Right ventricle myocardium inferior (tissue), 1 donor: ENCODE measurements at regions of chr13 and their contacts with region 1.

Region 1: GRCh38 chr13:28796938-28797257 is 23.2 kb upstream of the MTUS2 start:
- DNase-seq: no peak
- ATAC-seq: no peak

Region 2: DNA sequence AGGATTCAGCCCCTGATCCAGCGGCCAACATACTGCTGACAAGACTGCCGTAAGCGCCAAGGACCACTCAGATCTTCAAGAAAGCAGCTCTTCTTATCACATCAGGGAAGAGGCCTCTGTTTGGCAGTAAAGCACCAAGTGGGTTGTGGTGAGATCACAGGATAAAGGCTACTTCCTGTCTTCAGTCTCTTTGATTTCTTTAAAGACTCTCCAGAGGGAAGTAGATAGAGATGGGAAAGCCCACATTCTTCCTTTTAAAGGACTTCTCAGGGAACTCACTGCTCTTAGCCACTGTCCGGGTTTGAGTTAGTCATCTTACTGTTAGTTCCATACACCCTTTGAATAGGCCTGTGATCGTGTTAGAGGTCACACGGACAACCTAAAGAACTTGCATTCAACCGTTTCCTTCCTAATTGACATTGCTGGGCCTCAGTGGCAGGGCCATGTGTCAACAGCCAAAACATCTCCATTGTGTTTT is 185.2 kb before region 1 on chr13:
- intact Hi-C with region 1: no loop called
- DNase-seq: no peak
- ATAC-seq: peak; percentile 28

Region 3: DNA sequence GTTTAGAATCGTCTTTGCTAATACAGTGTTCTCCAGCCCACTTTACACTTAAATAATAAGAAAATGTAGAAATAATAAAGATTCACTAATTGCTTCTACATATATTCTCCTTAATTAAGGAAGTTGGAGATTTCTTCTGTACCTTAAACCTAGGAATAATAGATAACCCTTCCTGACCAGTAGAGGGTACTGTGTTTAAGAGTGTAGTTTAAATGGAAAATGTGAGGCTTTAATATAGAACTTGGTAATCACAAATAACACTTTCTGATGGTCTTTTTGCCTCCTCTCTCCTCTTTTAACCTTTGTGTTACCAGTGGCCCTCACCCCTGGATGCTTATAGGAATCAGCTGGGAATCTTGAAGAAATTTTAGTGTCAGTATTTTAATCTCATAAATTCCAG is 117.3 kb before region 1 on chr13:
- intact Hi-C with region 1: loop called (anchors 1 kb)
- DNase-seq: no peak
- ATAC-seq: no peak

Region 4: DNA sequence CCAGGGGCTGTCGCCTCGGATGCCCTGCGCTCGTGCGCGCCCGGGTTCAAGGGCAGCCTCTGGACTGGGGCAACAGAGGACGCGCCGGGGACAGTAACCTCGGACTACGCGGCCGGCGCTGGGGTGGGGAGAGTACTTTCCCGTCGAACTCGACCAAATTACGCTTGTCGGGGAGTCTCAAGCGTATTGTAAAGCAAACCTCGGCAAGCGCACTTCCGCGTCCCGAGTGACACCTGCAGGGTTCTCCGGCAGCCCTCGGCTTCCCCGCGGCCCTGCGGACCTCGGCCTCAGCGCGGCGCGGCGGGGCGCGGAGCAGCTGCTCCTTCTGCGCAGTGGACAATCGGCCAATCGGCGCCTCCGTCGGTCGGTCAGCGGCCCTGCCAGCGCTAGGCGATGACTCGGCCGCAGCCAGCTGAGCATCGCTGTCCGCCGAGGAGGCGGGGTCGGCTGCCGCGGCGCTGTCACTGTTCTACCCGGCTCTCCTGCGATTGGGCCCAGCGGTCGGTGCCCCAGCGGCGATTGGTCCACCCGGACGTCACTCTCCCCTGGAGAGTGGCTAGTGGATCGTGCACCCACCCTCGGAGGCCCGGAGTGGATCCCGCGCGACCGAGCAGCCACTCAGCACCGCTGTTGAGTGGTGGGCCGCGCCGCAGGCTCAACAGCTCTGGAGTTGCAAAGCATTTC is 78.2 kb before region 1 on chr13 and contains the start of gene SLC46A3:
- intact Hi-C with region 1: loop called (anchors 2 kb)
- DNase-seq: peak; percentile 99
- ATAC-seq: peak; percentile 99
- total RNA-seq, gene SLC46A3: 17.4 TPM

Region 5: DNA sequence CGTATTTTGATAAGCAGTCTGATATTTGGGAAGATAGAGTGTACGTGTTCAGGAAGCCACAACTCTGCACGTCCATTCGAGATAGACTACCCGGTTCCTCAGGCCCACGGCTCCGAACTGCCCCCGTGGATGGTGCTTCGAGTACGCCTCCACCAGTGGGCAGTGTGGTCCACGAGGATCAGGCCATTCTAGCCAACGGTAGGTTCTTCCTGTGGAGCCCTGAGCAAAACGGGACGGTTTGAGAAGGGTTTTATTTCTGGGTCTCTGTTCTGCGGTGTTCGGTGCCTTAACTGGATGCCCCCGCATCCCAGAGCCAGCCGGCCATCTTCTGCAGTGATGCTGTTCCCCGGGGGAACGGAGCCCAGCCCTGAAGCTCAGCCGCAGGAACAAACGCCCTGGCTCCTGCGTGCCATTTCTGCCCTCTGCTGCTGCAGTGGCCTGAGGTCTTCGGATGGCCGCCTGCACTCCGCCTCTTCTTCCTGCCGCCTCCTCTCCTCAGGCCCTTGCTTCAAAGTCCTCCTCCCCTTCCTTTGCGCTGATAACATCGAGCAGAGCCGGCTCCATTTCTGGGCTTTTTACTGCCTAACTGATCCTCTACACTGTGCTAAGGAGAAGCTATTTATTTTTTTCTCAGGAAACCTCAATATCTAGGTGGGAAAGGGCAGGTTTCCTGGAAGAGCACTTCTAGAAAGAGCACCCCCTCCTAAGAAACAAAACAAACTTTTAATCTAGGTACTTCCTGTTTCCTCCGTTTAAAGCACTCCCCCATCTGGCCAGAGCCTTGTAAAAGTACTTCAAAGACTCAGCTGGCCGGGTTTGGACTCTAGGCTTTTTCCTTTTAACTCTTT is 42.0 kb before region 1 on chr13:
- intact Hi-C with region 1: loop called (anchors 2 kb)
- DNase-seq: no peak
- ATAC-seq: peak; percentile 42